CD8-positive, alpha-beta T cell (primary cell): ENCODE measurements at regions of chr12 and their contacts with region 1.

Region 1: DNA sequence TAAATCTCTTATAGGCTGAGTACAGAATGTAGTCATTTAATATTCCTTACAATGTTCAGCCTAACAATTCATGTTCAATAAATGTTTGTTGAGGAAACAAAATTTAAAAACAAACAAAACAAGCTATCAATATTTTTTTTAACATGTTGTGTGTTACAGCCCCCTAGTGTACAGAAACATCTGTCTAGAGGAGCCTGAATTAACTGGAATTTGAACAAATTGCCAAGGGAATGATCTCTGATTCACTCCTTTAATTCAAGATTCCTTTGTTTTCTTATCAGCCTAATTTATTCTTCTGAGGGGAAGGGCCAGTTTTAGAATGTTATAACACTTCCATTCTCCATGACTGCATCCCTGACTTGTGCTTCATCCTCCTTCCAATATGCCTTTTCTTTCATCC is 127.2 kb downstream of the CMAS start:
- DNase-seq: peak in 1 of 9 experiments; percentile 20
- ATAC-seq: no peak
- H3K4me3 ChIP-seq: no peak overlapping the region
- H3K4me3 Mint-ChIP-seq: no peak overlapping the region
- H3K27ac ChIP-seq: no peak overlapping the region
- H3K27ac Mint-ChIP-seq: no peak overlapping the region
- H3K4me1 ChIP-seq: no peaks in the 10 kb centered on the region
- H3K4me1 Mint-ChIP-seq: peaks cover 3% of the 10 kb centered on the region
- H3K27me3 ChIP-seq: no peaks in the 10 kb centered on the region
- H3K27me3 Mint-ChIP-seq: no peaks in the 10 kb centered on the region
- CTCF ChIP-seq: no peak

Region 2: GRCh38 chr12:22083167-22083566 is 90.0 kb before region 1 on chr12:
- CTCF ChIA-PET with region 1: interaction called, 12 read pairs
- POLR2A ChIA-PET with region 1: no interaction called
- intact Hi-C with region 1: loop called in 1 of 2 experiments (anchors 5 kb)
- DNase-seq: peak in 4 of 9 experiments; percentile 13 to 63 (median 44)
- ATAC-seq: peak; percentile 49
- H3K4me3 ChIP-seq: no peak overlapping the region
- H3K4me3 Mint-ChIP-seq: no peak overlapping the region
- H3K27ac ChIP-seq: no peak overlapping the region
- H3K27ac Mint-ChIP-seq: no peak overlapping the region
- H3K4me1 ChIP-seq: no peaks in the 10 kb centered on the region
- H3K4me1 Mint-ChIP-seq: no peaks in the 10 kb centered on the region
- H3K27me3 ChIP-seq: no peaks in the 10 kb centered on the region
- H3K27me3 Mint-ChIP-seq: no peaks in the 10 kb centered on the region
- CTCF ChIP-seq: peak; percentile 47

Region 3: GRCh38 chr12:22100958-22101748 is 72.0 kb before region 1 on chr12:
- CTCF ChIA-PET with region 1: interaction called, 18 read pairs
- POLR2A ChIA-PET with region 1: no interaction called
- intact Hi-C with region 1: loop called in 1 of 2 experiments (anchors 1 kb)
- DNase-seq: peak in 7 of 9 experiments; percentile 8 to 75 (median 31)
- ATAC-seq: peak; percentile 51
- H3K4me3 ChIP-seq: no peak overlapping the region
- H3K4me3 Mint-ChIP-seq: no peak overlapping the region
- H3K27ac ChIP-seq: no peak overlapping the region
- H3K27ac Mint-ChIP-seq: no peak overlapping the region
- H3K4me1 ChIP-seq: peaks cover 4% of the 10 kb centered on the region
- H3K4me1 Mint-ChIP-seq: peaks cover 3% of the 10 kb centered on the region
- H3K27me3 ChIP-seq: no peaks in the 10 kb centered on the region
- H3K27me3 Mint-ChIP-seq: no peaks in the 10 kb centered on the region
- CTCF ChIP-seq: no peak

Region 4: GRCh38 chr12:22196236-22196635 is 23.1 kb after region 1 on chr12:
- CTCF ChIA-PET with region 1: no interaction called
- POLR2A ChIA-PET with region 1: no interaction called
- intact Hi-C with region 1: no loop called
- DNase-seq: no peak
- ATAC-seq: no peak
- H3K4me3 ChIP-seq: no peak overlapping the region
- H3K4me3 Mint-ChIP-seq: no peak overlapping the region
- H3K27ac ChIP-seq: no peak overlapping the region
- H3K27ac Mint-ChIP-seq: no peak overlapping the region
- H3K4me1 ChIP-seq: no peaks in the 10 kb centered on the region
- H3K4me1 Mint-ChIP-seq: no peaks in the 10 kb centered on the region
- H3K27me3 ChIP-seq: no peaks in the 10 kb centered on the region
- H3K27me3 Mint-ChIP-seq: no peaks in the 10 kb centered on the region
- CTCF ChIP-seq: no peak

Region 5: GRCh38 chr12:22447223-22447622 is 274.0 kb after region 1 on chr12:
- CTCF ChIA-PET with region 1: no interaction called
- POLR2A ChIA-PET with region 1: no interaction called
- intact Hi-C with region 1: no loop called
- DNase-seq: no peak
- ATAC-seq: no peak
- H3K4me3 ChIP-seq: no peak overlapping the region
- H3K4me3 Mint-ChIP-seq: no peak overlapping the region
- H3K27ac ChIP-seq: no peak overlapping the region
- H3K27ac Mint-ChIP-seq: no peak overlapping the region
- H3K4me1 ChIP-seq: peaks cover 4% of the 10 kb centered on the region
- H3K4me1 Mint-ChIP-seq: peaks cover 4% of the 10 kb centered on the region
- H3K27me3 ChIP-seq: no peaks in the 10 kb centered on the region
- H3K27me3 Mint-ChIP-seq: no peaks in the 10 kb centered on the region
- CTCF ChIP-seq: no peak